Activated naive CD4-positive, alpha-beta T cell treated with anti-CD3 and anti-CD28 coated beads for 36 hours (primary cell): ENCODE measurements at regions of chr16 and their contacts with region 1.

Region 1: DNA sequence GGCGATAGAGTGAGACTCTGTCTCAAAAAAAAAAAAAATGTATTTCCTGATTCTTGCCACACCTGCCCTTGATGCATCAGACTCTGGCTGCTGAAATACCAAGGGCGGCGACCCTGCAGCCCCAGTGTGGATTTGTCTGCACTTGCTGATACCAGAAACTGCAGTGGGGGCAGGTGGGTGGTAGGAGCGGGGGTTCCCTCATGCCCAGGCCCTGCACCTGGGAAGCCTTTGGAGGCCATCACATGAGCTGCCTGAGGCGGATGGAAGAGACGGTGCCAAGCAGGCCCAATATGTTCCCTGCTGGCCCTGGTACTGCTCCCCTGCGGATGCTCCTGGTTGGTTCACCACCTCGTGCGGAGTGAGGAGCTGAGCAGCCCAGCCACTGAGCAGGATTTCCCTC is 50.6 kb downstream of the MARF1 start:
- DNase-seq: peak; percentile 46
- H3K4me3 Mint-ChIP-seq: no peak overlapping the region
- H3K27ac Mint-ChIP-seq: no peak overlapping the region
- H3K4me1 Mint-ChIP-seq: peaks cover 50% of the 10 kb centered on the region
- H3K27me3 Mint-ChIP-seq: no peaks in the 10 kb centered on the region

Region 2: DNA sequence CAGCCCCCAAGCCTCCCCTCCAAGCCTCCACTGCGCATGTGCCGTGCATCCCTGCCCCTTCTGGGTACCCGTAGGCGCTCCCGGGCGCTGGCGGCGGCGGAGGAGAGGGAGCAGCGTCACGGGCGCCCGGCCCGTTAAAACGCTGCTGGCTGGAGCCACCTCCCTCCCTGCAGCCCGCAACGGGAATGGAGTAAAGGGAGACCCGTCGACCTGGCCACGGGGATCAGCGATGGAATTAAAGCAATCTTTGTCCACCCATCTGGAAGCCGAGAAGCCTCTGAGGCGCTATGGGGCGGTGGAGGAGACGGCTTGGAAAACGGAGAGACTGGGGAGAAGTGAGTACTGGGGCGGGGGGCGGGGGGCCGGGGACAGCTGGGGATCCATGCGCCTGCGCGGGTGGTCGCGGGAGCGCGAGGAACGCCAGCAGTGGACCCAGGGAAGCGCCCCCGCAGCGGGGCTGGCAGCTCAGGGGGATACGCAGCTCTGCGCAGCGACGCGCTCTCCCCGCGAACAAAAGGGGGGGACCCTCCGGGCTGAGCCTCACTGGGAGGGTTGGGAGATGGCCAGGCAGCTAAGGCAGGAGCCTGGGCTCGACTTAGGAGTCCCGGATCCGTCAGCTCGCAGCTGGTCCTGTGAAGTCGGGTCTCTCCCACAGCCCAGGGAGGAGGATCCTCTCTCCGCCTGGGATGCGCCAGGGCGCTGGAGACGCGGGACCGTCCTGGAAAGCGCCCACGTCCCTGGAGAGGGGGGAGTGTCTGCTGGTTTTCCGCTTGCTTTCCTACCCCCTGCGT is 157.7 kb before region 1 on chr16 and contains the start of gene BMERB1:
- CTCF ChIA-PET with region 1: no interaction called
- intact Hi-C with region 1: loop called (anchors 2 kb)
- DNase-seq: peak; percentile 72
- H3K4me3 Mint-ChIP-seq: peak within 1 kb of the TSS; percentile 79
- H3K27ac Mint-ChIP-seq: no peak within 1 kb of the TSS
- H3K4me1 Mint-ChIP-seq: peaks cover 9% of the 10 kb centered on the region
- H3K27me3 Mint-ChIP-seq: peaks cover 18% of the 10 kb centered on the region
- total RNA-seq, gene BMERB1: 7.2 to 9.0 TPM

Region 3: GRCh38 chr16:15466886-15467781 is 125.2 kb before region 1 on chr16:
- CTCF ChIA-PET with region 1: no interaction called
- intact Hi-C with region 1: no loop called
- DNase-seq: no peak
- H3K4me3 Mint-ChIP-seq: no peak overlapping the region
- H3K27ac Mint-ChIP-seq: no peak overlapping the region
- H3K4me1 Mint-ChIP-seq: no peaks in the 10 kb centered on the region
- H3K27me3 Mint-ChIP-seq: no peaks in the 10 kb centered on the region

Region 4: DNA sequence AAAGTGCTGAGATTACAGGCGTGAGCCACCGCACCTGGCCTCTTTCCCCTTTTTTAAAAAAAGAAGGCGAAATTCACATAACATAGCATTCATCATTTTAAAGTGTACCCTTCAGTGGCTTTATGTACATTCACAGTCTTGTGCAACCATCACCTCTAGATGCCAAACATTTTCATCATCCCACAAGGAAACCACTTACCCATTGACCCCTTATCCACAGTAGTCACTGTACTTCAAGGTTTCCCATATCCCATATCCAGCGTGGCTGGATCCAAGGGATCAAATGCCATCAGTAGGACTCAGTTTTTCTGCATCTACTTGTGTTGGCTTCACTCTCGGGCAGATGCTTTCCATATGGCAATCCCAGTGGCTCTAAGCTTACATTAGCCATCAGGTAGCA is 107.7 kb before region 1 on chr16:
- CTCF ChIA-PET with region 1: no interaction called
- intact Hi-C with region 1: loop called (anchors 2 kb)
- DNase-seq: no peak
- H3K4me3 Mint-ChIP-seq: no peak overlapping the region
- H3K27ac Mint-ChIP-seq: no peak overlapping the region
- H3K4me1 Mint-ChIP-seq: peaks cover 26% of the 10 kb centered on the region
- H3K27me3 Mint-ChIP-seq: no peaks in the 10 kb centered on the region

Region 5: DNA sequence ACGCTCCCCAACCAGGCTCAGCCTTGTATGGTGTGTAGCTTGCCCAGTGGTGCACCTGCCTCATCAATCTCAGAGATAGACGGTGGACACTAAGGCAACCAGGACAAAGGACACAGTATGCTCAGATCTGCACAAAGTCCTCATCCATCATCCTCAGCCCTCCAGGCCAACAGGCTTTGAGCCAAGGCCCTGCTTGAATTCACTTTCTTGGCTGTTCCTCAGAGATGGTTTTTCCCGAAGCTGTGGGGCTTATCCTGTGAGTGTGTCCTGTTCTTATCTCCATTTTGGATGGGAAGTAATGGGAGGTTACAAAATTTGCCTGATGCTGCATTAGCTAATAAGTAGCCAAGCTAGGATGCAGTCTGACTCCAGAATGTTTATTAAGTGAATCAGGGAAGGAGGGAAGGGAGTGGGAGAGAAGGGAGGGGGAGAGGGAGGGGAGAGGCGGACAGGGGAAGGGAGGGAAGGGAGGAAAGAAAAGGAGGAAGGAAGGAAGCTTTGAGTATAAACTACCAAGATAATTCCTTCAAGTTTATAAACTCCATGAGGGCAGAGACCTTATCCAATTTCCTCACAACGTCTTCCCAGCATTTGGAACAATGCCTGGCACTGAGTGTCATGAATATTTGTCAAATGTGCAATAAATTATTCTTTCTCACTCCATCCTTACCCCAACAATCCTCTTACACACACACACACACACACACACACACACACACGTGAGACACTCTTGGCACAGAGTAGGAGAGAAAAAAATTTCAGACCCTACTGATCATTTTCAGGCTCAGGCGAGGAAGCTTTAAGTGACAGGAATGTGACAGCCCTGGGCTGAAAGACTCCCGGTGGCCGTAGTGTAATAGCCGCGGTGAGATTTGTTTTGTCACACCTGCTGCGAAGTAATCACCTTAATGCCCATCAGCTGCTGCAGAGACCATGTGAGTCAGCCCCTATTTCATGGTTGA is 73.7 kb before region 1 on chr16:
- CTCF ChIA-PET with region 1: no interaction called
- intact Hi-C with region 1: no loop called
- DNase-seq: no peak
- H3K4me3 Mint-ChIP-seq: no peak overlapping the region
- H3K27ac Mint-ChIP-seq: no peak overlapping the region
- H3K4me1 Mint-ChIP-seq: peaks cover 10% of the 10 kb centered on the region
- H3K27me3 Mint-ChIP-seq: no peaks in the 10 kb centered on the region

Region 6: GRCh38 chr16:15572329-15573001 is 19.9 kb before region 1 on chr16:
- CTCF ChIA-PET with region 1: interaction called, 7 read pairs
- intact Hi-C with region 1: loop called (anchors 1 kb)
- DNase-seq: peak; percentile 59
- H3K4me3 Mint-ChIP-seq: no peak overlapping the region
- H3K27ac Mint-ChIP-seq: peak overlapping the region; percentile 17
- H3K4me1 Mint-ChIP-seq: peaks cover 32% of the 10 kb centered on the region
- H3K27me3 Mint-ChIP-seq: no peaks in the 10 kb centered on the region

Region 7: DNA sequence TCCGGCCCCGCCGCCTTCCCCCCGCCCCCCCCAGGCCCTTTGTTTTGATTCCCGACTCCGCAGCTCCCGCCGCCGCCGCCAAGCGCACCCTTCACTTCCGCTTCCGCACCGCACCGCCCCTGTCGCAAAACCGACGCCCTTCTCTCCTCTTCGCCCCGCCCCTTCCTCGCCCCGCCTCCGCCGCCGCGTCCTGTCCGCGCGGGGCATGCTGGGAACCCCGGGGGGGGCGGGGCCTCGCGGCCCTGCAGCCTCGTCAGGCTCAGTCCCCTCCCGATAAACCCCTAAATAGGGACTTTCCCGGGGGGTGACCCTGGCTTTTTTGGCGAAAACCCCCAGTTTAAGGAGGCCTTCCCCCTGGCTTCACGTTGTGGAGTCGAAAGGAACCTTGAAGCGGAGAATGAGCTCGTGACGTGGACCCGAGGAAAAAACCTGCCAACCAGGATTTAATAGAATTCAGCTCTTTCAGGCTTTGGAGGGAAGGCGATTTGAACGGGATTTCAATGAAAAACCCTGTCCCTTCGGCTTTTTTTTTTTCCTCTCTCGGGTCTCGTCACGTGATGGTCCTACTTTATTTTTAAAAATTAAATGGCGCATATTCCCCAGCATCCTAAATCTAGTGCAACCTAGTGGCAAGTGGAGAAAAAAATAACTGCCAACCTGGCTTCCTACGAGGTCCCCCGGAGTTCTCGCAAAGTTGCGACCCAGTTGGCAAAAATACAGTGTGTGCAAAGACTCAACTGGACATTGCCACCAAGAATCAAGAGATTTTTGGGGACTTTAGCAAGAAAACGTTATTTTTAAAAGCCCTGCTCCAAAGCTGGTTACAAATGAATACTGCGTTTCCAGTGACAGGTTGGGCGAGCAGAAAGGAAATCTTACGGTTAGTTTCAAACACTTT is 51.0 kb after region 1 on chr16 and contains the start of gene MARF1:
- CTCF ChIA-PET with region 1: interaction called, 3 read pairs
- intact Hi-C with region 1: loop called (anchors 1 kb)
- DNase-seq: peak; percentile 99
- H3K4me3 Mint-ChIP-seq: peak within 1 kb of the TSS; percentile 85
- H3K27ac Mint-ChIP-seq: peak within 1 kb of the TSS; percentile 99
- H3K4me1 Mint-ChIP-seq: peaks cover 61% of the 10 kb centered on the region
- H3K27me3 Mint-ChIP-seq: no peaks in the 10 kb centered on the region
- total RNA-seq, gene MARF1: 72.6 to 80.2 TPM